Esophagus muscularis mucosa (tissue), 4 donors: ENCODE measurements at regions of chr4 and their contacts with region 1.

Region 1: DNA sequence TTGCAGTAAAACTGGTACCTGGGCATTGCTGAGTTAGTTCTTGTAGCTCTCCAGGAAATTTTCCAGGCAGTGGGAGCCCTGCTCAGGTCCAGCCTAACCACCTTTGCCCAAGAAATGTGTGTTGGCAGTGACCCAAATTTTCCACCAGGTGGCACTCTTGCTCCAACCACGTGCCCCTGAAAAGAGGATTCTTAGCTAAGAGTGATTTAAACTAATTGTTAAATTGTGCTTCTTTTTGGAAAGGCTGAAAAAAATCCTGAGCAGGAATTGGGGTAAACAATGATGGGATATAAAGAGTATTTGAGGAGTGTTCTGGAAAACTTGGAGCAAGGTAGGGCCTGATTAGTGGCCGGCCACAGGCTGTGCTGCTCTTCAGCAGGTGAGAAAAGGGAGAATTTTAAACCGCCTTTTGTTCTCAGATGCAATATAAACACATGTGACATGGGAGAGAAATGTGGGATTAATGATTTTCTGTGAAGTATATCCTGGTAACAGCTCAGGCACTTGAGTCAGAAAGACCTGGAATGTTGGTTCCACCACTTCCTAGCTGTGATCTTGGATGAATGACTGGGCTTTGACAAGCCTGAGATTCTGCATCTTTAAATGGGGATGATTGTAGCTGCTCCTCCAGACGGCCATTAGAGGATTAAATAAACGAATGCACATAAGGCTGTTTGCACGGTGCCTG is 219.6 kb downstream of the PTTG2 start:
- DNase-seq: peak; percentile 94
- H3K4me3 ChIP-seq: no peak overlapping the region
- H3K27ac ChIP-seq: peak overlapping the region in 3 of 4 donors; percentile 55 to 57 (median 56)
- H3K4me1 ChIP-seq: peaks cover 10 to 16% (median 12%) of the 10 kb centered on the region in 4 donors
- H3K27me3 ChIP-seq: no peaks in the 10 kb centered on the region
- CTCF ChIP-seq: peak; percentile 86 to 94 (median 93)
- EP300 ChIP-seq: no peak
- POLR2A ChIP-seq: peak; percentile 10

Region 2: GRCh38 chr4:37826295-37827029 is 353.4 kb before region 1 on chr4 and contains the start of gene PGM2:
- intact Hi-C with region 1: no loop called
- DNase-seq: peak; percentile 95
- H3K4me3 ChIP-seq: peak within 1 kb of the TSS; percentile 68 to 90 (median 87)
- H3K27ac ChIP-seq: peak within 1 kb of the TSS; percentile 83 to 92 (median 90)
- H3K4me1 ChIP-seq: peaks cover 18 to 37% (median 27%) of the 10 kb centered on the region in 4 donors
- H3K27me3 ChIP-seq: no peaks in the 10 kb centered on the region
- CTCF ChIP-seq: peak in 2 of 3 experiments; percentile 7 to 16
- EP300 ChIP-seq: no peak
- POLR2A ChIP-seq: peak; percentile 19
- total RNA-seq, gene PGM2: 17.4 to 19.2 (median 18.8) TPM

Region 3: DNA sequence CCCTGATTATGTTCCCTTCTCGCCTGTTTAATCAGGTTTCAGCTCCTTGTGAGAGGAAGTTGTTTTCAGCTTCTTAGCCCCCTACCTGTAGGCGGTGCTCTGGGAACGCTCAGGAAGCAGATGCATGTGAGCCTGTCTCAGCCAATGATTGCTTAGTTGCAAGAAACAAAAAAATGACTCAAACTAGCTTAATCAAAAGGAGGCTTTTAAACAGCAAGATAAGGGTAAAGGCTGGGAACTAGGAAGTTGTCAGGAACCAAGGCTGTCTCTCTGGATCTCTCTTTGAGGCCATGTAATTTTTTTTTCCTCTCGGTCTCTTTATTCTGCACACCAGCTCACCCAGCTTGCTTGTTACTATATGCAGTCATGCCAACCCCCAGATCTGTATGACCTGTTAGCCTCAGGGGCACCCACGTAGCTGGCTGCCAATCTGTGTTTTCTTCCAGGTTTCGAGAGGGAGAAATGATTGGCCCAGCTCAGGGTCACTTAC is 110.5 kb before region 1 on chr4:
- intact Hi-C with region 1: loop called (anchors 5 kb)
- DNase-seq: peak; percentile 37
- H3K4me3 ChIP-seq: no peak overlapping the region
- H3K27ac ChIP-seq: no peak overlapping the region
- H3K4me1 ChIP-seq: peaks cover 20 to 39% (median 31%) of the 10 kb centered on the region in 4 donors
- H3K27me3 ChIP-seq: no peaks in the 10 kb centered on the region
- CTCF ChIP-seq: no peak
- EP300 ChIP-seq: no peak
- POLR2A ChIP-seq: no peak

Region 4: DNA sequence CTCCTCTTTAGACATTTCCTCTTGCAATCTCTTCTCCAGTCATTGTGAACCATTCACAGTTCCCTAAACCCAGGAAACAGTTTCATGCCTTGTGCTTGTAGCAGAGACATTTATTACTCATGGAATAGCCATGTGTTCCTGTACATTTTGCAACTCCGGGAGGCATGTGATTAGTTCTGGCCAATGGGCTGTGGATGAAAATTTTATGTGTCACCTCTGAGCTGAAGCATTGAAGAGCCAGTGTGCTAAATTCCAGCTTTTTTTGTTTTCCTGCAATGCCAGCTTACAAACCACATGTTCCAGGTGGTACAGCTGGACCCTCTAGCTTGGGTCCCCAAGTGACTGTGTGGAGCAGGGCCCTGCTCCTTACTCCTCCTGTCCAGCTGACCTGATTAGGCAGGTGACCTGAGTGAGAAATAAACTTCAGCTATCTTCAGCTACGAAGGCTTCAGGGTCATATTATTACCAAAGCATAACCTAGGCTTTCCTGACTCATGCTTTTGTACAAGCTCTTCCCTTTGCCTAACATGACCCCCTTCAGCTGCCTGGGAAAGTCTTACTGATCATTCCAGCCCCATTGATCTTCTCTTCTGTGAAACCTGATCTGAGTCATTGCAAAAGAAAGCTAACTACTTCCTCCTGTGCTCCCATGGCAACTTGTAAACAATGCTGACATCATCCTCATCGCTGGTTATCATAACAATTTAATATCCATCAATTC is 19.2 kb before region 1 on chr4:
- intact Hi-C with region 1: no loop called
- DNase-seq: no peak
- H3K4me3 ChIP-seq: no peak overlapping the region
- H3K27ac ChIP-seq: peak overlapping the region in 3 of 4 donors; percentile 50 to 58 (median 54)
- H3K4me1 ChIP-seq: peaks cover 9 to 29% (median 20%) of the 10 kb centered on the region in 4 donors
- H3K27me3 ChIP-seq: no peaks in the 10 kb centered on the region
- CTCF ChIP-seq: no peak
- EP300 ChIP-seq: no peak
- POLR2A ChIP-seq: no peak

Region 5: DNA sequence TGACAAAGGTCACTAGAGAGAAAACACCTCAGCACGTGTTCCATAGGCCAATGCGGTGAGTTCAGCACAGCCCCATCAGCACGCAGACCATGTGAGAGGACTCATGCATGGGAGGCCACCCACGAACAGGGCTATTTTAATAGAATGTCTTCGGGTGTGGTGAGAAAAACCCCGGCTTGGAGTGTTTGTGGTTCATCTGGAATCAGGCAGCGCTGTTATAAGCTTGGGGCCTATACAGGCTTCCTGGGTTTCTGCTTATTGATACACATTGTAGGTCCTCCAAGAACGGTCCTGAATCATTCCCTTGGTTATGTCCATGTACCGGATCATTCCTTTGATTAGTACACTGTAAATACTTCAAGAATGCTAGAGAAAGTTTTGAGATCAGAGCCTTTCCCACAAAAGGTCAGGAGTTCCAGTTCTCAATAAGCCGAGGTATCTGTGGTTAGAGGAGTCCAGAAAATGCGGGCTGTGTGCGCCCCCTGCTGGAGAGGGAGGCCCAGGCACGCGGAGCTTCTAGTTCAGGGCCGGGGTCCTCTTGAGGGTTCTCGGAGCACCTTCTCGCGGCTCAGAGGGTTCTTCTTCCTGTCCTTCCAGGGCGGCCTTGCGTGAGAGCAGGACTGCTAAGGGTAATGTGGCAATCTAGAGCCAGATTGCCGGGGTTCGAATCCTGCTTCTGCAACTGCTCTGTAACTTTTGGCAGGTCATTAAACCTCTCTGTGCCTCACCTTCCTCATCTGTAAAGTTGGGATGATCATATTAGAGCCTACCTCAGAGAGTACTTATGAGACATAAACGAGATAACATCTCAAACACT is 551.2 kb after region 1 on chr4:
- intact Hi-C with region 1: loop called (anchors 1 kb)
- DNase-seq: no peak
- H3K4me3 ChIP-seq: no peak overlapping the region
- H3K27ac ChIP-seq: no peak overlapping the region
- H3K4me1 ChIP-seq: peaks cover 7 to 10% (median 9%) of the 10 kb centered on the region in 4 donors
- H3K27me3 ChIP-seq: no peaks in the 10 kb centered on the region
- CTCF ChIP-seq: peak; percentile 91 to 97 (median 95)
- EP300 ChIP-seq: no peak
- POLR2A ChIP-seq: no peak